Testis (tissue), 5 donors: ENCODE measurements at regions of chr4 and their contacts with region 1.

Region 1: GRCh38 chr4:7802093-7802726 is 137.5 kb downstream of the AFAP1 start:
- DNase-seq: peak; percentile 91
- H3K4me3 ChIP-seq: no peak overlapping the region
- H3K27ac ChIP-seq: no peak overlapping the region
- H3K4me1 ChIP-seq: peaks cover 14% of the 10 kb centered on the region
- H3K27me3 ChIP-seq: no peaks in the 10 kb centered on the region
- CTCF ChIP-seq: peak; percentile 76 to 87 (median 85)
- POLR2A ChIP-seq: no peak

Region 2: GRCh38 chr4:7998447-7998846 is 196.2 kb after region 1 on chr4:
- intact Hi-C with region 1: loop called (anchors 5 kb)
- DNase-seq: no peak
- H3K4me3 ChIP-seq: no peak overlapping the region
- H3K27ac ChIP-seq: no peak overlapping the region
- H3K4me1 ChIP-seq: no peaks in the 10 kb centered on the region
- H3K27me3 ChIP-seq: no peaks in the 10 kb centered on the region
- CTCF ChIP-seq: no peak
- POLR2A ChIP-seq: no peak